Spleen (tissue), 13 donors: ENCODE measurements at regions of chr2 and their contacts with region 1.

Region 1: GRCh38 chr2:88059979-88060906 is 4.7 kb upstream of the KRCC1 start:
- DNase-seq: no peak
- H3K4me3 ChIP-seq: no peak overlapping the region
- H3K27ac ChIP-seq: no peak overlapping the region
- H3K4me1 ChIP-seq: peaks cover 0 to 14% (median 8%) of the 10 kb centered on the region in 6 donors
- H3K27me3 ChIP-seq: no peaks in the 10 kb centered on the region
- CTCF ChIP-seq: peak in 10 of 11 experiments; percentile 36 to 75 (median 64)
- POLR2A ChIP-seq: no peak

Region 2: DNA sequence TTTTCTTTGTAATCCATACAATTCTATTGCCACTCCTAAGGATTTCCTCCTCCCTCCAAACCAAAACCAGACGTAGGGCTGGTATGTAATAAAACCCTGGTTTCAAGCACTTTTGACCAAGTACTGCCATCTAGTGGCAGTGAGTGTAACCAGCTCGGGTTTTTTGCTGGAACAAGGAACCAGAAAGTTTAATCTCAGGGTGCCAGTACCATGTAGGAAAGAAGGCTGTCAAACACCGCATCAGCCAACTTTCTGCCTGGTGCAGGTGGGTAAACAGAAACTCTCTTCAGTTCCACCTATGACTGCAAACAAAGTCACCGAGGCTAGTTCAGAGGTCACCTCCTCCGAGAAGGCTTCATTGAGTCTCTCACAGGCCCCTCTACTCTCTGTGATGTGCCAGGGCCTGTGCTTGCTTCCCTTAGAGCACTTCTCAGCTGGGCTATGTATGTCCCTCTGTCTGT is 99.7 kb after region 1 on chr2:
- intact Hi-C with region 1: loop called (anchors 5 kb)
- DNase-seq: no peak
- H3K4me3 ChIP-seq: no peak overlapping the region
- H3K27ac ChIP-seq: no peak overlapping the region
- H3K4me1 ChIP-seq: peaks cover 0 to 5% (median 0%) of the 10 kb centered on the region in 6 donors
- H3K27me3 ChIP-seq: no peaks in the 10 kb centered on the region
- CTCF ChIP-seq: peak; percentile 58 to 87 (median 81)
- POLR2A ChIP-seq: no peak